Heart right ventricle (tissue), 16 donors: ENCODE measurements at regions of chrX and their contacts with region 1.

Region 1: GRCh38 chrX:14291666-14292500 is 237.5 kb upstream of the GLRA2 start:
- DNase-seq: no peak
- ATAC-seq: no peak
- H3K4me3 ChIP-seq: no peak overlapping the region
- H3K27ac ChIP-seq: no peak overlapping the region
- H3K4me1 ChIP-seq: no peaks in the 10 kb centered on the region
- H3K27me3 ChIP-seq: no peaks in the 10 kb centered on the region
- CTCF ChIP-seq: no peak

Region 2: DNA sequence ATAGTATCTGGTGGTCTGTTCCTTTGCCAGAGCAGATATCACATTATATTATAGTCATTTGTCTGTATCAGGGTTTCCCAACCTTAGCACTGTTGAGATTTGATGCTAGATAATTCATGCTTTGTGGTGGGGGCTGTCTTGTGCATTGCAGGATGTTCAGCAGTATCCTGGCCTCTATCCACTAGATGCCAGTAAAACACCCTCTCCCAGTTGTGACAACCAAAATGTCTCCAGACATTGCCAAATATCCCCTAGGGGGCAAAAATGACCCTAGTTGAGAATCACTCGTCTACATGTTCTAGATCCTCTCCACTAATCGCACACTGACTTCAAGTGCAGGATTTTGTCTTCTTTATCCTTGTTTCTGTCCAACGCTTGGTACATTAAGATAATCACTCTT is 420.2 kb after region 1 on chrX:
- intact Hi-C with region 1: loop called in 1 of 10 experiments (anchors 10 kb)
- DNase-seq: no peak
- ATAC-seq: no peak
- H3K4me3 ChIP-seq: no peak overlapping the region
- H3K27ac ChIP-seq: no peak overlapping the region
- H3K4me1 ChIP-seq: no peaks in the 10 kb centered on the region
- H3K27me3 ChIP-seq: no peaks in the 10 kb centered on the region
- CTCF ChIP-seq: no peak